Common myeloid progenitor, CD34-positive (primary cell): ENCODE measurements at regions of chr20 and their contacts with region 1.

Region 1: DNA sequence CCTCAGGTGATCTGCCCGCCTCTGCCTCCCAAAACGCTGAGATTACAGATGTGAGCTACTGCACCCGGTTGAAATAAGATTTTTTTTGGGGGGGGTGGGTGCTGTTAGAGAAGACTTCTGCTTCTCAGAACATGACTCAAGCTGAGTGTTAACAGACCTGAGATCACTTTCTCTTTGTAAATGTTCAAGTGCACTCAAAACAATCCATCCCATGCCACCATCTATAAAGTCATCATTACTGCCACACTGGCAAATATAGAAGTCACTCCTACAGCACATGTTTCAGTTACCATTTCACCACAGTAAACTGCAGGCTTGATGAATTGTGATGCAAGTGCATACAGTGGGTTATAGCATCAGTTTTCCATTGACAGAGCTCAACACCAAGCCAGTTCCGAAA is 9.0 kb downstream of the VPS16 start:
- DNase-seq: peak in 2 of 3 donors; percentile 21 to 25
- H3K4me3 ChIP-seq: no peak overlapping the region
- H3K27ac ChIP-seq: no peak overlapping the region
- H3K4me1 ChIP-seq: peaks cover 5 to 17% (median 13%) of the 10 kb centered on the region in 4 experiments
- H3K27me3 ChIP-seq: no peaks in the 10 kb centered on the region

Region 2: DNA sequence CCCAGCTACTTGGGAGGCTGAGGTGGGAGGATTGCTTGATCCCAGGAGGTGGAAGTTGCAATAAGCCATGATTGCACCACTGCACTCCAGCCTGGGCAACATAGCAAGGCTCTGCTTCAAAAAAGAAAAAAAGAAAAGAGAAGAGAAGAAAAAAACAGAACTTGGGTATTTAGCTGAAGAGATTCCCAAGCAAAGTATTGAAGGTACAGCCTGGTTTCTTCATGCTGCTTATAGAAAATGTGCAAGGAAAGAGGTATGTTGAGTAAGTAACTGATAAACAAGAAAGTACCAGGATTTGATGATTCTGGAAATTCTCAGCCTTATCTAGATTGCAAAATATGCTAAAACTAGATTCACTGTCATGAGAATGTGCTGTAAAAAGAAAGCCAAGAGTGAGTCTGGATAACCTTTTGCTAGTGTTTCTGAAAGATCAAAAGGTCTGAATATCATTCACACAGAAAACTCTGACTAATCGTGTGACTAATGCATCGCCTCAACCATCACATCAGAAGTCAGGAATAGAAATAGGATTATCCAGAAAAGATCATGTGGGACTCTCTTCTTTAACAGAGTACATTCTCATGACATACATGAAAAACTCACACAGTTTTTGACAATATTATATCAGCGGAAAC is 229.5 kb before region 1 on chr20:
- CTCF ChIA-PET with region 1: no interaction called
- POLR2A ChIA-PET with region 1: no interaction called
- DNase-seq: no peak
- H3K4me3 ChIP-seq: no peak overlapping the region
- H3K27ac ChIP-seq: no peak overlapping the region
- H3K4me1 ChIP-seq: no peaks in the 10 kb centered on the region
- H3K27me3 ChIP-seq: peaks cover 0 to 5% (median 2%) of the 10 kb centered on the region in 5 experiments

Region 3: GRCh38 chr20:2752567-2753460 is 96.7 kb before region 1 on chr20:
- CTCF ChIA-PET with region 1: interaction called, 47 read pairs
- POLR2A ChIA-PET with region 1: no interaction called
- DNase-seq: peak; percentile 52 to 63 (median 59)
- H3K4me3 ChIP-seq: peak overlapping the region in 6 of 7 experiments; percentile 27 to 69 (median 52)
- H3K27ac ChIP-seq: no peak overlapping the region
- H3K4me1 ChIP-seq: peaks cover 0 to 37% (median 34%) of the 10 kb centered on the region in 4 experiments
- H3K27me3 ChIP-seq: peaks cover 5 to 80% (median 27%) of the 10 kb centered on the region in 5 experiments

Region 4: DNA sequence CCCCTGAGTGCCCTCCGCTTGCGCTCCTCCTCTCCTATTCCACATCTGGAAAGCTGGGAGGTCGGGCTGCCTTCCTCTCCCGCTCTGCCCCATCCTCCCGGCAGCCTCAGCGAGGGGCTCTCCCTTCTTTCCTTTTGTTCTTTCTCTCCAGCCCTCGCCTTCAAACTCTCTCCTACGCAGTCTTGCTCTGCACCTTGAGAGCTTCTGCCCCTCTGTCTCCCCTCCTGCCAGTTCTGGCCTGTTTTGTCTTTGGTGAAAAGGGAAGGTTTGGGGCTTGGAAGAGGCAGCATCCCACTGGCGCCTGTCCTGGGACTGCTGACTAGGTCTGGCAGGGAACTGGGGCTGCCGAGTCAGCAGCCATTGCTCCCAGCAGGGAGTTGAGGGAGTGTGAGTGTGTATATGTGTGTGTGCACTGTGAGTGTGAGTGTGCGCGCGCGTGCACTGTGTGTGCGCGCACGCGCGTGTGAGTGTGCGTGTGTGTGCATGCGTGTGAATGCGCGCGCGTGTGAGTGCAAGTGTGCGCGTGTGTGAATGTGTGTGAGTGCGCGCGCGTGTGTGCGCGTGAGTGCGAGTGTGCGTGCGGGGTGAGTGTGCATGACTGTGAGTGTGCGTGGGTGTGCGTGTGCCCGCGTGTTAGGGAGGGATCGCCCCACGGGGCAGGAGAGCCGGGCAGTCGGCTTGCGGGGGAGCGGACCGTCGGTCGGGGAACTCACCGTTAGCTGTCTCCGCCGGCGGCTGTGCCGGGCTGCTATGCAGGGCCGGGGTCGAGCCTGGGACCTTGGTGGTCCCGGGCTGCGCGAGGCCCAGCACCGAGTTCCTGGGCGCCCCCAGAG is 49.6 kb before region 1 on chr20:
- CTCF ChIA-PET with region 1: interaction called, 14 read pairs
- POLR2A ChIA-PET with region 1: interaction called, 9 read pairs
- DNase-seq: peak in 2 of 3 donors; percentile 27 to 44
- H3K4me3 ChIP-seq: peak overlapping the region; percentile 60 to 95 (median 86)
- H3K27ac ChIP-seq: peak overlapping the region in 1 of 2 experiments; percentile 49
- H3K4me1 ChIP-seq: peaks cover 0 to 50% (median 39%) of the 10 kb centered on the region in 4 experiments
- H3K27me3 ChIP-seq: peaks cover 0 to 6% (median 2%) of the 10 kb centered on the region in 5 experiments

Region 5: GRCh38 chr20:2865630-2866029 is 16.1 kb after region 1 on chr20:
- CTCF ChIA-PET with region 1: interaction called, 12 read pairs
- POLR2A ChIA-PET with region 1: interaction called, 3 read pairs
- DNase-seq: peak in 2 of 3 donors; percentile 28 to 50
- H3K4me3 ChIP-seq: no peak overlapping the region
- H3K27ac ChIP-seq: no peak overlapping the region
- H3K4me1 ChIP-seq: peaks cover 2 to 35% (median 30%) of the 10 kb centered on the region in 4 experiments
- H3K27me3 ChIP-seq: no peaks in the 10 kb centered on the region